ENCODE measurements at regions of chr5 and their contacts with region 1.

Region 1: DNA sequence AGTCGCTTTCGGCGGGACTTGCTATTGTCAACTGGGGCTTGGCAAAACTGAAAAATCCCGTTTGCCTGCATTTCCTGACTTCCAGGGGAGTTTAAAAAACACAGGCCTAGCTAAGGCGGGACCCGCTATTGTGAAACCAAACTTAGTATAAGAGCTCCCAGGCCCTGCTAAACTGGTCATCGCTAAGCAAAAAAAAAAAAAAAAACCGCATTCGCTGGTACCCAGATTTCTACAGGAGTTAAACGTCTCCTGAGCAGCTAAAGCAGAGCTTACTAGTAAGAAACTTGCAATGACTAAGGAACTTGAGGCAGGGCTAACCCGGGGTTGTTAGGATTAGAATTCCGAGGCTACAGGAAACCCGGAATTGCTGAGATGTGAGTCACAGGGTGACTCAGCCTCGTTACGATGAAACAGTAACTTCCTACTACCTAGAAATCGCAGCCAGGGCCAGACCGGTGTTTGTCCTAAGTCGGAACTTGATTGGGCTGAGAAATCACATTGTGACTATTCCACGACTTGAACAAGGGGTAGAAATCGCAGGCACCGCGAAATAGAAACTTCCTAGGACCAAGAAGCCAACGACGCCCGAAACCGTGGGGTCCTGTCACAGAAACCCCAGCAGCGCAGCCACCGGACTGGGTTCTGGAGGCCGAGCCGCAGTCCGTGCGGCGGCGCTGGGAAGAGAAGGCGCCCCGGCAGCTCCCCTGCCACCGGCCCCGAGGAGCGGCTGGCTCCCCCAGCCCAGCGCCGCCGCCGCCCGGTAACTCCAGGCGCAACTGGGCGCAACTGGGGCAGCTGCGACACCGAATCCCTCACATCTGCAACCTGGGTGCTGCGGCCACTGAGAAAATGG is 89.5 kb downstream of the ANXA2R start:
- DNase-seq: peak; percentile 100
- ATAC-seq: peak; percentile 78
- H3K4me3 ChIP-seq: peak overlapping the region; percentile 45
- H3K27ac ChIP-seq: peak overlapping the region; percentile 90
- H3K4me1 ChIP-seq: peaks cover 4% of the 10 kb centered on the region
- H3K27me3 ChIP-seq: no peaks in the 10 kb centered on the region
- CTCF ChIP-seq: no peak; the same call in 1 of the 2 replicates
- POLR2A ChIP-seq: peak; percentile 83
- RAD21 ChIP-seq: no peak

Region 2: GRCh38 chr5:42908509-42909488 is 41.9 kb before region 1 on chr5:
- CTCF ChIA-PET with region 1: interaction called, 5 read pairs
- POLR2A ChIA-PET with region 1: no interaction called
- dilution Hi-C with region 1: no loop called
- in situ Hi-C with region 1: no loop called
- intact Hi-C with region 1: loop called (anchors 2 kb)
- DNase-seq: peak; percentile 85
- ATAC-seq: peak; percentile 96
- H3K4me3 ChIP-seq: peak overlapping the region; percentile 50
- H3K27ac ChIP-seq: no peak overlapping the region
- H3K4me1 ChIP-seq: no peaks in the 10 kb centered on the region
- H3K27me3 ChIP-seq: peaks cover 13% of the 10 kb centered on the region
- CTCF ChIP-seq: peak; percentile 83
- POLR2A ChIP-seq: no peak
- RAD21 ChIP-seq: peak; percentile 78

Region 3: GRCh38 chr5:43514816-43515677 is 564.4 kb after region 1 on chr5 and contains the start of gene C5orf34:
- CTCF ChIA-PET with region 1: no interaction called
- POLR2A ChIA-PET with region 1: no interaction called
- dilution Hi-C with region 1: no loop called
- in situ Hi-C with region 1: no loop called
- intact Hi-C with region 1: loop called (anchors 5 kb)
- DNase-seq: peak; percentile 94
- ATAC-seq: peak; percentile 97
- H3K4me3 ChIP-seq: peak within 1 kb of the TSS; percentile 67
- H3K27ac ChIP-seq: peak within 1 kb of the TSS; percentile 78
- H3K4me1 ChIP-seq: no peaks in the 10 kb centered on the region
- H3K27me3 ChIP-seq: no peaks in the 10 kb centered on the region
- CTCF ChIP-seq: no peak
- POLR2A ChIP-seq: peak; percentile 86
- RAD21 ChIP-seq: no peak
- total RNA-seq, gene C5orf34: 6.1 and 7.2 TPM in 2 replicates

Measured in IMR-90 (cell line).